ENCODE measurements at regions of chr4 and their contacts with region 1.

Region 1: GRCh38 chr4:39977489-39978377 is at the start of gene PDS5A:
- DNase-seq: peak; percentile 88 to 92 (median 90)
- H3K4me3 ChIP-seq: peak within 1 kb of the TSS; percentile 71 to 96 (median 92)
- H3K27ac ChIP-seq: peak within 1 kb of the TSS; percentile 82 to 99 (median 93)
- H3K4me1 ChIP-seq: peaks cover 7 to 15% of the 10 kb centered on the region in 2 donors
- H3K27me3 ChIP-seq: no peaks in the 10 kb centered on the region
- CTCF ChIP-seq: peak; percentile 47 to 99 (median 80)
- POLR2A ChIP-seq: peak; percentile 69 to 73
- total RNA-seq, gene PDS5A: 30.1 to 63.2 (median 52.5) TPM

Region 2: GRCh38 chr4:39469429-39470077 is 508.2 kb before region 1 on chr4:
- intact Hi-C with region 1: loop called in 1 of 2 experiments (anchors 5 kb)
- DNase-seq: peak; percentile 49 to 84 (median 69)
- H3K4me3 ChIP-seq: no peak overlapping the region
- H3K27ac ChIP-seq: peak overlapping the region in 3 of 5 donors; percentile 10 to 66 (median 58)
- H3K4me1 ChIP-seq: peaks cover 0 to 13% of the 10 kb centered on the region in 2 donors
- H3K27me3 ChIP-seq: no peaks in the 10 kb centered on the region
- CTCF ChIP-seq: peak; percentile 86 to 98 (median 92)
- POLR2A ChIP-seq: no peak

Region 3: DNA sequence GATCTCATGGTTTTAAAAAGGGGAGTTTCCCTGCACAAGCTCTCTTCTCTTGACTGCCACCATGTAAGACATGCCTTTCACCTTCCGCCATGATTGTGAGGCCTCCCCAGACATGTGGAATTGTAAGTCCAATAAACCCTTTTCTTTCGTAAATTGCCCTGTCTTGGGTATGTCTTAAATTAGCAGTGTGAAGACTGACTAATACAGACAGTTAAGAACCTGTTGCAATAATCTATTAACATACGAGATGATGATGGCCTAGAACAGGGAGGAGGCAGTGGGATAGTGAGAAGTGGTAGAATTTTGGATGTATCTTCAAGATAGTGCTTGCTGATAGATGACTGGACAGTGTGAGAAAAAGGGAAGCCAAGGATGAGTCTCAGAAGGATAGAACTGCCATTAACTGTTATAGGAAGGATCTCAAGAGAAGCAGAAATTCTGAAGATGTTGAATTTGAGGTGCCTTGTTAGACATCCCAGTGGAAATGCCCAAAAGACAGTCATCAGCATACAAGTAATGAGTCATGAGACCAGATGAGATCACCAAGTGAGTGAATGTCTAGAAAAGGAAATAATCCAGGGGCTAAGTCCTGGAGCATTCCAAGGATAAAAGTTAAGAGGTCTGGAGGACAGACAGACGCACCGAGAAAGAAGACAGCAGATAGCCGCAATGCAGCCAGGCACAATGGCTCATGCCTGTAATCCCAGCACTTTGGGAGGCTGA is 411.7 kb before region 1 on chr4:
- intact Hi-C with region 1: no loop called
- DNase-seq: no peak
- H3K4me3 ChIP-seq: no peak overlapping the region
- H3K27ac ChIP-seq: peak overlapping the region in 2 of 5 donors; percentile 58 to 66
- H3K4me1 ChIP-seq: no peaks in the 10 kb centered on the region
- H3K27me3 ChIP-seq: no peaks in the 10 kb centered on the region
- CTCF ChIP-seq: no peak
- POLR2A ChIP-seq: no peak

Region 4: DNA sequence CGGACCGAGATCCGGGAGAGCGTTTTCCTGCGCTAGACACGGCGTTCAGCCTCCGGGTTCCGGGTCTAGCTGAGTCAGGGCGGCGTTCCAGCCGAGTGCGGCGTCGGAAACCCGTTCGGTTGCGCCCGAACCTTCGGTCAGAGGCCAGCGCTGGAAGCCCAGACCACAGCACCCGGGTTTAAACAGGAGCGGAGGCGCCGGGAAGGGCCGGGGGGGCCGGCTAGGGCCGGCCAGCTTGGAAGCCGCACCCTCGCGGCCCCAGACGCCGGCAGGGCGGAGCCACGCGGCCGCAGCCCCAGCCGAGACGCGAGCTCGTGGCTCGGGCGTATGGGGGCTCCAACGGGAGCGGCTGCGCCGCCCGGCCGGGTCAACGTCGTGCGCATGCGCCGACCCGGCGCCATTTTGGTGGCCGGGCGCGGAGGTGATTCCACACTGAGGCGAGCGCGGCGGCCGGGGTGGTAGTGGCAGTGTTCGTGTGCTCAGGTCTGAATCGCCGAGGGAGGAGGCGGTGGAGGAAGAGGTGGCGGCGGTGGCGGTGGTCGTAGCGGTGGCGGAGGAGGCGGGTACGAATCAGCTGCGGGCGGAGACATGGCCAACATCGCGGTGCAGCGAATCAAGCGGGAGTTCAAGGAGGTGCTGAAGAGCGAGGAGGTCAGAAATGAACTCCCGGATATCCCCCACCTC is 279.9 kb before region 1 on chr4 and contains the start of gene UBE2K:
- intact Hi-C with region 1: loop called (anchors 5 kb)
- DNase-seq: peak; percentile 87 to 92 (median 90)
- H3K4me3 ChIP-seq: peak within 1 kb of the TSS; percentile 63 to 98 (median 82)
- H3K27ac ChIP-seq: peak within 1 kb of the TSS; percentile 87 to 96 (median 90)
- H3K4me1 ChIP-seq: peaks cover 17 to 36% of the 10 kb centered on the region in 2 donors
- H3K27me3 ChIP-seq: no peaks in the 10 kb centered on the region
- CTCF ChIP-seq: no peak
- POLR2A ChIP-seq: peak; percentile 22 to 78
- total RNA-seq, gene UBE2K: 17.9 to 91.4 (median 32.1) TPM

Region 5: GRCh38 chr4:39913471-39913870 is 64.3 kb before region 1 on chr4:
- intact Hi-C with region 1: loop called in 1 of 2 experiments (anchors 10 kb)
- DNase-seq: no peak
- H3K4me3 ChIP-seq: no peak overlapping the region
- H3K27ac ChIP-seq: peak overlapping the region in 1 of 5 donors; percentile 17
- H3K4me1 ChIP-seq: no peaks in the 10 kb centered on the region
- H3K27me3 ChIP-seq: no peaks in the 10 kb centered on the region
- CTCF ChIP-seq: no peak
- POLR2A ChIP-seq: no peak

Measured in adrenal gland (tissue), 19 donors.